Activated CD4-positive, alpha-beta T cell treated with anti-CD3 and anti-CD28 coated beads, Interleukin-2, amount 10 ng/mL, durations not matched to agents 24 days and 14 days (primary cell): ENCODE measurements at regions of chr17 and their contacts with region 1.

Region 1: DNA sequence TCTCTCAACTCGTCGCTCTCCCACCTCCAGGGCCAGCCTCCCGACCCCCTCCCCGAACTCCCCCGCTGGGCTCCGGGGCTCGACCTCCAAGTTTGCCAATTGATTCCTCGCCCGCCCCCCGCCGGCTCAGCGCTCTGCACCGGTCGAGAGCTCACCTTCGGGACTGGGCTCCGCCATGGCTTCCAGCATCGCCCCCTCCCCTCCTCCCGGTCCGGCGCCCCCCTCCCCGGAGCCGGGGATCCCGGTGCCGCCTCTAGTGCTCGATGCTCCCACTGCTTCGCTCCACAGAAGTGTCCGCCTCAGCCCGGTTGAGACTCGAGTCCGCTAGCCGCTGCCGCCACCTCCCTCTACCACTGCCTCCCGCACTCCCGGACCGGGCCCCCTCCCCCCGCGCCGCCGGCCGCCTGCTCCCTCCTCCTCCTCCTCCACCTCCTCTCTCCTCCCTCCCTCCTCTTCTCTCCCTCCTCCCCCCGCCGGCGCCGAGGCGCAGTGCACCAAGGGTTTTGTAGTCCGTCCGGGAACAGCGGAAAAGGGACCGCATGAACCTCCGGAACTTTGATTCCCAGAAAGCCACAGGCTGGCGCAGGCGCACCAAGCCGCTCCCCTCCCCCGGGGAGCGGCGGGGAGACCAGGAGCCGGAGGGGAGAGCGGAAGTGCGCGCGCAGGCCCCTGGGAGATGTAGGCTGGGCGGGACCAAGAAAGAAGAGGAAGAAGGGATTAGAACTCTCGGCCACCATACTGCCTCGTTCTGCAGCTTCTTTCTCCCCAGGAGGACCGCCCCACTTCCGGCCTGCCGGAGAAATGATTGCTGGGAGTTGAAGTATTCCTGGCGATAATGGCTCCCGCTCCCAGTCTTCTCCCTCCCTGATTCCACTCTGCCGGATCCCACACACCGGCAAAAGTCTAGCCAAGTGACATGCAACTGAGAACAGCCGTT is at the start of gene PHF23:
- DNase-seq: peak; percentile 99
- H3K4me3 Mint-ChIP-seq: peak within 1 kb of the TSS; percentile 99
- H3K27ac Mint-ChIP-seq: peak within 1 kb of the TSS; percentile 95
- H3K4me1 Mint-ChIP-seq: peaks cover 59% of the 10 kb centered on the region
- H3K27me3 Mint-ChIP-seq: peaks cover 2% of the 10 kb centered on the region
- total RNA-seq, gene PHF23: 46.2 and 51.7 TPM in 2 replicates

Region 2: DNA sequence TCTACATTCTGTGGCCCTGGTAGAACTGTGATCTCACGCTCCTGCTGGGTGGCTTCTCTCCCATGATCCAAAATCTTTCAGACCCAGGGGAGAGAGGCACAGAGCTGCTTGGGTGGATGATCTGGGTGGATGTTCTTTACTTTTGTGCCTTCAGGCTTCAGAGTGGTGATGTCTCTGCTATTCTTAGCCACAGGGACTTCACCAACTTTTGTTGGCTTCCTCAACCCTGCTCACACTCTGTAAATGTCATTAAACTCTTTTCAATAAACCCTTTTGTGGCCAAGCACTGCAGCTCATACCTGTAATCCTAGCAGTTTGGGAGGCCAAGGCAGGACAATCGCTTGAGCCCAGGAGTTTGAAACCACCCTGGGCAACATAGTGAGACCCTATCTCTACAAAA is 167.0 kb before region 1 on chr17:
- intact Hi-C with region 1: no loop called
- DNase-seq: no peak
- H3K4me3 Mint-ChIP-seq: no peak overlapping the region
- H3K27ac Mint-ChIP-seq: no peak overlapping the region
- H3K4me1 Mint-ChIP-seq: no peaks in the 10 kb centered on the region
- H3K27me3 Mint-ChIP-seq: peaks cover 13% of the 10 kb centered on the region

Region 3: DNA sequence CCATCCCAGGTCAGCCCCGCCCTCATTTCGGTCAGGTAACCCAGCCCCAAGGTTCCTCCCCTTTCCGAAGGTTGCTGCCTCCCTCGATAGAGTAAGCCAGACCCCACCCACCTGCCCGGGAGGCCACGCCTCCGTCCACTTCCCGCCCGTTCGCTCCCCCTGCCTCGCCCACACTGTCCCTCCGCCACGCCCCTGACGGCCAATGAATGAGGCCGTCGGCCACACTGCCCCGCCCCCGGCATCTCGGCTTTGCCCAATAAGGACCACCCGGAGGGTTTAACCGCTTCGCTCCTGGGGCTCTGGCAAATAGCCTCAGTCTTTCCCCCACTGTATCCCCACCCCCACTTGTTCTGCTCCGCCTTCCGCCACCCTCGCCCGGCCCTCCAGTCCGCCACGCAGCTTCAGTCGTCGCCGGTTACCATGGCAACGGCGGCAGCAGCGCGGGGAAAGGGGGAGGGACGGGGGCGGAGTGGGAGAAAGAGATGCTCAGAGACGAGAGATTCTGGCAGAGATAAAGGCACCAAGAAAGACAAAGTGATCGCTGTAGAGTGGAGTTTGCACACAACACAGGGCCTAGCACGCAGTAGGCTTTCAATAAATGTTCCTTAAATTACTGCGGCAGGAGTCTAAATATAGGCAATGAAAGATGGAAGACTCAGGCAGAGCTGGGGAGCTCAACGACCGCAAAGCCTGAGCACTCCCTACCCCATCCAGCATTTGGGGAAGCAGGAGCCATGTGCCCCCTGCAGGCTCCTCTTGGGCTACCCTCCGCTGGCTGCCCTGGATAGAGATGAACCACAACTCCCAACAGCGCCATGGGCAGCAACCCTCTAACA is 24.8 kb before region 1 on chr17:
- intact Hi-C with region 1: loop called (anchors 1 kb)
- DNase-seq: peak; percentile 100
- H3K4me3 Mint-ChIP-seq: peak overlapping the region; percentile 96
- H3K27ac Mint-ChIP-seq: peak overlapping the region; percentile 99
- H3K4me1 Mint-ChIP-seq: peaks cover 56% of the 10 kb centered on the region
- H3K27me3 Mint-ChIP-seq: peaks cover 18% of the 10 kb centered on the region

Region 4: DNA sequence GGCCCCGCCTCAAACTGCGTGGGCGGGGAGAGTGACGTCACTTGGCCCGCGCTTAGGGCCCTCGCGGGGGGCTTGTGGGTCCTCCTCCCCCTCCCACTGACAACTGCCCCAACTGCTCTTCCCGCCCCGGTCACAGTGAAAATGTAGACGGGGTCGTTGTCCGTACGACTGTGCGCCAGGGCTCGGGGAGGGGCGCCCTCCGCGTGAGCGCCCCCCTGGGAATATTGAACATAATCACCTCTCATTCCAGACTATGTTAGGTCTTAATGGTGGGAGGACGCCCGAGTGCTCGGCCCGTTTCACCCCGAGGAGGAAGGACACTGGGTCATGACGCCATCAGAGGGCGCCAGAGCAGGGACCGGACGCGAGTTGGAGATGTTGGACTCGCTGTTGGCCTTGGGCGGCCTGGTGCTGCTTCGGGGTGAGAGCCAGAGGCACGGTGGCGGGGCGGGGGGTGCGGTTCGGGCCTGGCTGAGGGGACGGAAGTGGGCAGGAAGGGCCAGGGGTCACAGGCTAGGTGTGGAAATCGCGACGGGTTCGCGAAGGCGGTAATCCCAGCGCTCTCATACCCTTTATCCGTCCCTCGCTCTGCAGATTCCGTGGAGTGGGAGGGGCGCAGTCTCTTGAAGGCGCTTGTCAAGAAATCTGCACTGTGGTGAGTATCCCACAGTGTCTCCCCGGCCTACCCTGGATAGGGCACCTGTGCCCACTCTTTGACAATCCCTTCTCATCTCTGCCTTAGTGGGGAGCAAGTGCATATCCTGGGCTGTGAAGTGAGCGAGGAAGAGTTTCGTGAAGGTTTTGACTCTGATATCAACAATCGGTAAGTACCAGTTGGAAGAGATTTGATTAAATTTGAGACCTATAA is 13.1 kb after region 1 on chr17 and contains the start of gene ELP5:
- intact Hi-C with region 1: loop called (anchors 1 kb)
- DNase-seq: peak; percentile 97
- H3K4me3 Mint-ChIP-seq: peak within 1 kb of the TSS; percentile 95
- H3K27ac Mint-ChIP-seq: peak within 1 kb of the TSS; percentile 100
- H3K4me1 Mint-ChIP-seq: peaks cover 45% of the 10 kb centered on the region
- H3K27me3 Mint-ChIP-seq: no peaks in the 10 kb centered on the region
- total RNA-seq, gene ELP5: 74.3 and 76.8 TPM in 2 replicates

Region 5: DNA sequence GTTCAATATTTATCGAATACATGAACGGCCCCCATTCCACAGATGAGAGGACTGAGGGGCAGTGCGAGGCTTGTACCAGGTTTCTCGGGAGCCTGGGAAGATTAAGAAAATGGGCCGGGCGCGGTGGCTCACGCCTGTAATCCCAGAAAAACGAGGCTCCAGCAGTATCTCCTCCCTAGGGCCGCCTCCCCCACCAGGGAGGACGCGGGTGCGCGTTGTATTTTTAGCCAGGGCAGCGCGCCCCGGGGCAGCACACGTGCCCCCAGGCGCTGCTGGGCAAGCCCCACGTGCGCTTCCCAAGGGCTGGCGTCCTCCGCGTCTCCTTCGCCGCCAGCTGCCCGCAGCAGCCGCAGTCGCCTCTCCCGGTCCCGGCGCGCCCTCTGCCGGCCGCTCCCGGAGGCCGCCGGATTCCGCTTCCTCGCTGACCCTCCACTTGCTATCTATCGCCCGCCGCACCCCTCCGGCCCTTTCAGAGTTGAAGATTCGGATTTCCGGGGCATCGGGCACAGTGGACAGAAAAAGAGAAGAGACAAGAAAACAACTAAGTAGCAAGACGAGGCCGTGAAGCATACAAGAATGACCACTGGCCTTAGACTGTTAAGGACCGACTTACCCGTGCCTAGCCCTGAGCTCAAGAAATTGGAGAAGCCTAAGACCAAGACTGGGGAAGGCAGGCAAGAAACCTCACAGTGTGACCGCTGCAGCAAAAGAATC is 57.0 kb after region 1 on chr17:
- intact Hi-C with region 1: no loop called
- DNase-seq: peak; percentile 93
- H3K4me3 Mint-ChIP-seq: peak overlapping the region; percentile 77
- H3K27ac Mint-ChIP-seq: no peak overlapping the region
- H3K4me1 Mint-ChIP-seq: peaks cover 15% of the 10 kb centered on the region
- H3K27me3 Mint-ChIP-seq: peaks cover 45% of the 10 kb centered on the region

Region 6: DNA sequence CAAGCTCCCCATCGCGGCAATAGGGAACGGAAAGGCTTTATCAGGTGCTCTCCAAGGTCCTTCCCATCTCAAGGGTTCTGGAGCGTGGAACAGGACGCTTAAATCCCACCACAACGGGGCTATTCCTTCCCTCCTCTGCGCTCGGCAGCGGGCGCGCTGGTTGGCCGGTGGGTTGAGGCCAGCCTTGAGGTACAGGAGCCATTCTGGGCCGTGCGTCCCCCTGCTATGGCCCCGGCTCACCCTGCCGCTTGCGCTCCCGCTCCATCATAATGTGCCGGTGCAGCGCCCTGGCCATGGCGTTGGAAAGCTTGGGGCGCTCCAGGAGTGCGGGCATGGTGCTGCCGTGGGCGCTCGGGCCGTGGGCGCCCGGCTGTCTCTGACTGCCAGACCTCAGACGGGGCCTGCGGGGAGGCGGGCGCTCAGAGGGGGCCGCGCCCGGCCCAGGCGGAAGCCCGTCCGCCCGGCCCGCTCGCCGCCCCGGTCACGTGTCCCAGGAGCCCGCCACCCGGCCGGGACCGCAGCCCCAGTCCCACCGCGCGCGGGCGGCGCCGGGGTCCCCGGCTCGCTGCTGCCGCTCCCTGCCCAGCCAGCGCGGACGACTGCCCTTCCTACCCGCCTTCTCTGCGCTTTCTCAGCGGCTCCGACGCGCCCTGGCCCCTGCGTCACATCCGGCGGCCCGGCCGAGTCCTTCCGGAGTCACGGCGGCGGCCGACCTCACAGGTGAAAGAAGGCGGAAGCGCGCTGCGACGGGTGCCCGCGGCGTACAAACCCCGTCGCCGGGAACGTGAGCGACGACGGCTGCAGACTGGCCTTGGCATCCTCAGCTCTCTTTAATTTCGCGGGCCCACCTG is 75.6 kb after region 1 on chr17 and contains the start of gene GPS2:
- intact Hi-C with region 1: loop called (anchors 2 kb)
- DNase-seq: peak; percentile 99
- H3K4me3 Mint-ChIP-seq: peak within 1 kb of the TSS; percentile 85
- H3K27ac Mint-ChIP-seq: peak within 1 kb of the TSS; percentile 96
- H3K4me1 Mint-ChIP-seq: peaks cover 45% of the 10 kb centered on the region
- H3K27me3 Mint-ChIP-seq: no peaks in the 10 kb centered on the region
- total RNA-seq, gene GPS2: 51.5 and 56.2 TPM in 2 replicates

Region 7: GRCh38 chr17:7844292-7845154 is 605.2 kb after region 1 on chr17:
- intact Hi-C with region 1: loop called (anchors 10 kb)
- DNase-seq: peak; percentile 96
- H3K4me3 Mint-ChIP-seq: peak overlapping the region; percentile 99
- H3K27ac Mint-ChIP-seq: peak overlapping the region; percentile 100
- H3K4me1 Mint-ChIP-seq: peaks cover 37% of the 10 kb centered on the region
- H3K27me3 Mint-ChIP-seq: peaks cover 2% of the 10 kb centered on the region

Region 8: GRCh38 chr17:8156246-8156992 is 917.1 kb after region 1 on chr17:
- intact Hi-C with region 1: loop called (anchors 10 kb)
- DNase-seq: peak; percentile 100
- H3K4me3 Mint-ChIP-seq: no peak overlapping the region
- H3K27ac Mint-ChIP-seq: no peak overlapping the region
- H3K4me1 Mint-ChIP-seq: peaks cover 62% of the 10 kb centered on the region
- H3K27me3 Mint-ChIP-seq: no peaks in the 10 kb centered on the region